CD8-positive, alpha-beta T cell (primary cell): ENCODE measurements at regions of chr3 and their contacts with region 1.

Region 1: DNA sequence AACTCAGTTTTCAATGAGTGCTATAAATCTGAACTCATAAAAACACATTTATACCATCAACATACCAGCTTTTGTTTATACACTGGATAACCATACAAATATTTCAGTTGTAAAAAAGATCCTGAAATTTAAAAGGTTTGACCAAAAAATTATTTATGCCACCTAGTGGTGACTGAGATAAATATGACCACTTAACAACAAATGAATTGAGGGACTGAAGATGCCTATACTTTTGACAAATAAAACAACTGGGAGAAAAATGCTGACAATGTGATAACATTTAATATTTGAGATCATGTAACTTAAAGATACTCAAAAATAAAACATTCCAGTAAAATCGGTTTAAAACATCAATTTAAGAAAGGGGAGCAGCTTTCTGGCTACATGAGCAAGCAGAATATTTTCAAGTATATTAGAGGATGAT is 30.4 kb downstream of the ATG3 start:
- DNase-seq: peak in 2 of 9 experiments; percentile 38 to 56
- ATAC-seq: peak; percentile 20
- H3K4me3 ChIP-seq: no peak overlapping the region
- H3K4me3 Mint-ChIP-seq: no peak overlapping the region
- H3K27ac ChIP-seq: no peak overlapping the region
- H3K27ac Mint-ChIP-seq: peak overlapping the region; percentile 39
- H3K4me1 ChIP-seq: no peaks in the 10 kb centered on the region
- H3K4me1 Mint-ChIP-seq: no peaks in the 10 kb centered on the region
- H3K27me3 ChIP-seq: no peaks in the 10 kb centered on the region
- H3K27me3 Mint-ChIP-seq: no peaks in the 10 kb centered on the region
- CTCF ChIP-seq: peak; percentile 78

Region 2: DNA sequence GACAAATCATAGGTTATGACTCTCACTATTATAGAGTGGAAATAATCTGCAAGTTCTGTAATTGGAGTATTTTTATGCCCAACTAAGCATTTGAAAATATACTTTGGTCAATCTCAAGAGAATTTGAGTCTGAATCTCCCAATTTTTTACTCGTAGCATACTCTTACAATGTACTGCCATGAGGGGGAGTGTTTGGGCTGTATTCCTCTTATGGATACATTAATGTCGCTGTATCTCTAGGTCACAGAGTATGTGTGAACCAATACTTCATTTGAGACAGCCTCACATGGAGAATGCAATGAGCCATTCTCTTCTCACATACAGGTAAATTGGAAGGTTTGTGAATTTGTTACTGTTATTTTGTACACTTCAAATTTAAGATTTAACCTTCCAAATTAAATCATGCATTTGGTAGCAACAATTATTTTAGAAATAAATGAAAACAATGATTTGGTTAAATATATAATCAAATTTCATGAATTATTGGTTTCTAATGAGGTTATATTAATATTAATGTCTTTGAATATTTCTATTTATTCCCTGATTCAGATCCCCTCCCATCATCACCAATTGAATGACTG is 203.9 kb before region 1 on chr3:
- CTCF ChIA-PET with region 1: interaction called, 3 read pairs
- POLR2A ChIA-PET with region 1: no interaction called
- intact Hi-C with region 1: loop called in 1 of 2 experiments (anchors 1 kb)
- DNase-seq: peak in 4 of 9 experiments; percentile 33 to 79 (median 56)
- ATAC-seq: peak; percentile 100
- H3K4me3 ChIP-seq: no peak overlapping the region
- H3K4me3 Mint-ChIP-seq: no peak overlapping the region
- H3K27ac ChIP-seq: no peak overlapping the region
- H3K27ac Mint-ChIP-seq: no peak overlapping the region
- H3K4me1 ChIP-seq: no peaks in the 10 kb centered on the region
- H3K4me1 Mint-ChIP-seq: peaks cover 2% of the 10 kb centered on the region
- H3K27me3 ChIP-seq: no peaks in the 10 kb centered on the region
- H3K27me3 Mint-ChIP-seq: peaks cover 2% of the 10 kb centered on the region
- CTCF ChIP-seq: peak; percentile 79

Region 3: DNA sequence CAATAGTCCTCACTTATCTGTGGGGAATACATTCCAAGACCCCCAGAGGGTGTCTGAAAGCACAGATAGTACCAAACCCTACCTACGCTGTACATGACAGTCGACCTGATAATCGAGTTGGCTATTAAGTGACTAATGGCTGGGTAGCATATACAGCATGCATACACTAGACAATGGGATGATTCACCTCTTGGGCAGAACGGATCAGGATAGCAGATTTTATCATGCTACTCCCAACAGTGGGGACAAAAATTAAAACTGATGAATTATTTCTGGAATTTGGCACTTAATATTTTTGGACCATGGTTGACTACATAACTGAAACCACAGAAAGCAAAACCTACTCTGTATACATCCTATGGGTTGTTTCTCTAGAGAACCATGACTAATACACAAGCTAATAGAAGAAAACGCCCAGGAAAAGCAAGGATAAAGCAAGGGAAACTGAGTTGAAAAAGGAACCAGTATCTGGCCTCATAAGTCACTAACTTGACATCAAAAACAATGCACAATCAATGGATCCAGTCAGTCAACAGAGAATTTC is 14.9 kb after region 1 on chr3:
- CTCF ChIA-PET with region 1: no interaction called
- POLR2A ChIA-PET with region 1: no interaction called
- intact Hi-C with region 1: no loop called
- DNase-seq: no peak
- ATAC-seq: no peak
- H3K4me3 ChIP-seq: no peak overlapping the region
- H3K4me3 Mint-ChIP-seq: no peak overlapping the region
- H3K27ac ChIP-seq: no peak overlapping the region
- H3K27ac Mint-ChIP-seq: no peak overlapping the region
- H3K4me1 ChIP-seq: no peaks in the 10 kb centered on the region
- H3K4me1 Mint-ChIP-seq: peaks cover 17% of the 10 kb centered on the region
- H3K27me3 ChIP-seq: no peaks in the 10 kb centered on the region
- H3K27me3 Mint-ChIP-seq: no peaks in the 10 kb centered on the region
- CTCF ChIP-seq: no peak